ENCODE measurements at regions of chr7 and their contacts with region 1.

Region 1: GRCh38 chr7:40474790-40475680 is 340.2 kb downstream of the SUGCT start:
- DNase-seq: no peak
- ATAC-seq: no peak
- H3K4me3 ChIP-seq: no peak overlapping the region
- H3K27ac ChIP-seq: no peak overlapping the region
- H3K4me1 ChIP-seq: peaks cover 10% of the 10 kb centered on the region
- H3K27me3 ChIP-seq: no peaks in the 10 kb centered on the region
- CTCF ChIP-seq: no peak
- EP300 ChIP-seq: no peak
- POLR2A ChIP-seq: no peak
- RAD21 ChIP-seq: no peak

Region 2: DNA sequence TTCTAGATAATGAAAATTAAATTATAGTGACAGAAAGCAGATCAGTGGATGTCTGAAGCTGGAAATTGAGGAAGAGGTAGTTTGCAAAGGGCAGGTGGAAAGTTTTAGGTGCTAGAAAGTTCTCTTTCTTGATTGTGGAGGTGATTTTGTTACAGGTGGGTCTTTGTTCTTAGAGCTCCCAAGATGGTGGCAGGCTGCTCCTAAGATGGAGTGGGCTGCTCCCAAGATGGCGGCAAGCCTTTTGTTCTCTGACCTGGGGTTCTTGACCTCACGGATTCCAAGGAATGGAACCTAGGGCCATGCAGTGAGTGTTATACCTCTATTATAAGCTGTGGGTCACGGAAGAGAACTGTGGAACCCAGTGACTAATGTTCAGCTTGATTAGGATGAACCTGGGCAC is 307.7 kb before region 1 on chr7:
- CTCF ChIA-PET with region 1: no interaction called
- POLR2A ChIA-PET with region 1: no interaction called
- in situ Hi-C with region 1: no loop called
- intact Hi-C with region 1: no loop called
- DNase-seq: no peak
- ATAC-seq: no peak
- H3K4me3 ChIP-seq: no peak overlapping the region
- H3K27ac ChIP-seq: no peak overlapping the region
- H3K4me1 ChIP-seq: no peaks in the 10 kb centered on the region
- H3K27me3 ChIP-seq: no peaks in the 10 kb centered on the region
- CTCF ChIP-seq: no peak
- EP300 ChIP-seq: no peak
- POLR2A ChIP-seq: no peak
- RAD21 ChIP-seq: no peak

Region 3: DNA sequence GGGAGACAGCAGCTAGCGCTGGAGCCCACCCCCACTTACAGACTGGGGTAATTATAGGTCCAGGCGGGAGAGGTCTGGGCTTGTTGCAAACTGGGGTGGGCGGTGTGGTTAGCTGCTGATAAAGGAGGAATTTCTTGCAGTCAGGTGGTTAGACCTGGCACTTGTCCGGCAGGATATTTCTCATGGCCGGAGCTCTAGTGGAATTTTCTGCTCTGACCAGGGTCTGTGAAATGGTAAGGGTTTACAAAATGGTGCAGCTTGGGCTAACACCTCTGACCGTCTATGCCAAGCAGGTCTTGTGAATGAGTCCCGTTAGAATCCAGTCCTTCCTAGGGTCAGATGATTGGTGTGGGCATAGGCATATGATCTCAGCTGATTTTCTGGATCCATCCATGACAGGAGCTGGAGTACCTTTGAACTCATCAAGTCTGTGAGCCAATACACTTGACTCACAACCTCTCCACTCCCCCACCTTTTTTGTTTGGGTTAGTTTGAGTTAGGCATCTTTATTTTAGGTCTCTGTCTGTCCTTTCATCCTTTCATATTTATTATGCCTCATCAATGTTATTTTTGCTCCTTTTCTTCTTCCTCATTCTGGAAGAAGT is 126.8 kb before region 1 on chr7:
- CTCF ChIA-PET with region 1: no interaction called
- POLR2A ChIA-PET with region 1: no interaction called
- in situ Hi-C with region 1: no loop called
- intact Hi-C with region 1: loop called (anchors 10 kb)
- DNase-seq: no peak
- ATAC-seq: no peak
- H3K4me3 ChIP-seq: no peak overlapping the region
- H3K27ac ChIP-seq: no peak overlapping the region
- H3K4me1 ChIP-seq: no peaks in the 10 kb centered on the region
- H3K27me3 ChIP-seq: no peaks in the 10 kb centered on the region
- CTCF ChIP-seq: no peak
- EP300 ChIP-seq: no peak
- POLR2A ChIP-seq: no peak
- RAD21 ChIP-seq: no peak

Region 4: DNA sequence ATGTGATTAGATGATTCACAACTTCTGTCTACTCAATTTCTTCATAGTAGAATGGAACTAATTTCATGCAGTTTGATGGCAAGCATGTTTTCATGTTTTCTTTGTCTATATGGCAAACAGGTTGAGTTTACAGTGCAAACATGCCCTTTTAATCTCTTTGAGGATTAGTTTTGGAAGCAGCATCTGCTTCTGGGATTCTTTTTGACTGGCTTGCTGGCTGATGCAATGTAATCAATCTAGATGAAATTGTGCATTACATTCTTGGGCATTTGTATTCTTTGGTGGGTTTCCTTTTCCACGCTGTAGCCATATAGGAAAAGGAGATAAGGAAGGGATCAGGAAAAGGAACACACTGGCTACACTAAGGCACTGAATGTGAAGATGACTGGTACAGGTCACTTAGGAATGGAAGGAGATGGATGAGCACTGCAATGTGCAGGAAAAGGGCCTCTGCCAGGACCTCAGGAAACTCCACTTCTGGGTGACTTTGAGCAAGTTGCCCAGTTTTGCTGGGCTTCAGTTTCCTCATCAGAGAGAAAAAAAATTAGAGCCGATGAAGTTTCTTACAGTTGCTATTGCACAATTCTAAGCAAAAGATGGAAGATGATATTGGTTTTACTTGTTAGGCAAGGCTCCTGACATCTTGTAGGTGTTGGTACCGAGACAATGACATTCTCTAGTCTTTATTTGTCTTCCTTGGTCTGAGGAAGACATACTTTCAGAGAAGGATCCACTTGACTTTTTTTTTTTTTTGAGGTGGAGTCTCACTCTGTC is 71.1 kb before region 1 on chr7:
- CTCF ChIA-PET with region 1: no interaction called
- POLR2A ChIA-PET with region 1: no interaction called
- in situ Hi-C with region 1: no loop called
- intact Hi-C with region 1: loop called (anchors 10 kb)
- DNase-seq: peak; percentile 88
- ATAC-seq: peak; percentile 96
- H3K4me3 ChIP-seq: peak overlapping the region in 1 of 3 experiments; percentile 24; a peak in 1 of 6 replicates
- H3K27ac ChIP-seq: peak overlapping the region; percentile 84
- H3K4me1 ChIP-seq: peaks cover 27% of the 10 kb centered on the region
- H3K27me3 ChIP-seq: no peaks in the 10 kb centered on the region
- CTCF ChIP-seq: no peak
- EP300 ChIP-seq: peak; percentile 73 to 88
- POLR2A ChIP-seq: no peak
- RAD21 ChIP-seq: 0 out of 2 replicates have a peak, but pooled peaks have one; percentile 22